ENCODE measurements at regions of chr2 and their contacts with region 1.

Region 1: DNA sequence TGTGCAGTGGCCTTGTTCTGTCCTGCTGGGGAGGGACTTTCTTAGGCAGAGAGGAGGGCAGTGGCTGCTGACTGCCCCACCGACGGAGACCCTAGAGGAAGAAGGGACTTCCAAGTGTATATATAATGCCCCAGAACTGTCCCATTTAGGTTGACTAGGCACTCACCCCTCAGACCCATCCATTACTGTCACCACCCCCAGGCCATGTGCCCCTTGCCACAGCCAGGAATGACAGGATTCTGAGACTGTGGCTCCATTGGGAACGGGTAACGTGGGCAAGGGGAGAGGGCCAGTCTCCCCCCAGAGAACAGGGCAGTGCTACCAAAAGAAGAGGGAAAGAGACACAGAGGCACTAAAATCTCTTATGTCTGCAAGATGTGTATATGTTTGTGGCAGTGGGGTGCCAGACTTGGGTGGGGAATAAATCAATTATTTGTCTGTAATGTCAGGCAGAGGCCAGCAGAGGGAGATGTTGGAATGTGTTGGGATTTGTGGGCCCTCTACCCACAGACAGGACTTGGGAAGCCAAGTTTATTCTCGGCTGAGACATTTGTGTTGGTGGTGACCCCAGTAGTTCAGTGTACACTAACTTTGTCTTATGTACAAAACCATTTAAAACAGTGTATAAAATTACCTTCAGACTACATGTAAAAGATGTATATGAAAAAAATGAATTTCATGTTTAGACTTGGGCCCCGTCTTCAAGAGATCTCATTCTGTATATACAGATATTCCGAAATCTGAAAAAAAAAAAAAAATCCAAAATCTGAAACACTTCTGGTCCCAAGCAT is 24.0 kb upstream of the TMEM37 start:
- DNase-seq: peak in 1 of 2 donors; percentile 61
- ATAC-seq: peak; percentile 45 to 85 (median 74)
- H3K4me3 ChIP-seq: no peak overlapping the region
- H3K27ac ChIP-seq: peak overlapping the region in 1 of 10 donors; percentile 16
- H3K4me1 ChIP-seq: peaks cover 0 to 13% (median 4%) of the 10 kb centered on the region in 9 donors
- H3K27me3 ChIP-seq: no peaks in the 10 kb centered on the region
- CTCF ChIP-seq: peak; percentile 67 to 85 (median 79)

Region 2: DNA sequence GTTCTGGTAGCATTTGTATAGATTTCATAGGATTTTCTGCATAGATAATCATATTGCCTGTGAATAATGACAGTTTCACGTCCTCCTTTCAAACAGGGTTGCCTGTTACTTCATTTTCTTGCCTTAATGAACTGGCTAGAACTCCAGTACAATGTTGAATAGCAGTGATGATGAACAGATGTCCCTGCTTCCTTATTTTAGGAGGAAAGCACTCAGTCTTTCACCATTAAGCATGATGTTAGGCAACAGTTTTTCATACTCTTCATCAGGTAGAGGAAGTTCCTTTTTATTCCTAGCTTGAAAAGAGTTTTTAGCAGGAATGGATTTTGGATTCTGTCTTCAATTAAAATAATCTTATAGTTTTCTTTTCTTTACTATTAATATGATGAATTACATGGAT is 80.7 kb before region 1 on chr2:
- intact Hi-C with region 1: no loop called
- DNase-seq: no peak
- ATAC-seq: no peak
- H3K4me3 ChIP-seq: no peak overlapping the region
- H3K27ac ChIP-seq: no peak overlapping the region
- H3K4me1 ChIP-seq: peaks cover 0 to 10% (median 0%) of the 10 kb centered on the region in 9 donors
- H3K27me3 ChIP-seq: no peaks in the 10 kb centered on the region
- CTCF ChIP-seq: no peak

Region 3: GRCh38 chr2:119476301-119477021 is 68.8 kb after region 1 on chr2:
- intact Hi-C with region 1: loop called (anchors 1 to 5 kb)
- DNase-seq: peak in 1 of 2 donors; percentile 52
- ATAC-seq: peak; percentile 57 to 78 (median 72)
- H3K4me3 ChIP-seq: peak overlapping the region in 2 of 10 donors; percentile 20
- H3K27ac ChIP-seq: peak overlapping the region in 5 of 10 donors; percentile 28 to 73 (median 44)
- H3K4me1 ChIP-seq: peaks cover 0 to 39% (median 18%) of the 10 kb centered on the region in 9 donors
- H3K27me3 ChIP-seq: peaks cover 0 to 6% (median 0%) of the 10 kb centered on the region in 7 donors
- CTCF ChIP-seq: peak; percentile 89 to 98 (median 96)

Region 4: GRCh38 chr2:119491808-119492533 is 84.3 kb after region 1 on chr2:
- intact Hi-C with region 1: no loop called
- DNase-seq: no peak
- ATAC-seq: peak in 6 of 8 donors; percentile 47 to 61 (median 50)
- H3K4me3 ChIP-seq: no peak overlapping the region
- H3K27ac ChIP-seq: peak overlapping the region in 6 of 10 donors; percentile 57 to 88 (median 70)
- H3K4me1 ChIP-seq: peaks cover 2 to 54% (median 29%) of the 10 kb centered on the region in 9 donors
- H3K27me3 ChIP-seq: peaks cover 0 to 9% (median 0%) of the 10 kb centered on the region in 7 donors
- CTCF ChIP-seq: no peak

Region 5: GRCh38 chr2:119592444-119592843 is 184.8 kb after region 1 on chr2:
- intact Hi-C with region 1: loop called in 1 of 10 experiments (anchors 5 kb)
- DNase-seq: no peak
- ATAC-seq: no peak
- H3K4me3 ChIP-seq: no peak overlapping the region
- H3K27ac ChIP-seq: no peak overlapping the region
- H3K4me1 ChIP-seq: peaks cover 0 to 30% (median 7%) of the 10 kb centered on the region in 9 donors
- H3K27me3 ChIP-seq: no peaks in the 10 kb centered on the region
- CTCF ChIP-seq: peak in 4 of 9 donors; percentile 7 to 46 (median 30)

Region 6: DNA sequence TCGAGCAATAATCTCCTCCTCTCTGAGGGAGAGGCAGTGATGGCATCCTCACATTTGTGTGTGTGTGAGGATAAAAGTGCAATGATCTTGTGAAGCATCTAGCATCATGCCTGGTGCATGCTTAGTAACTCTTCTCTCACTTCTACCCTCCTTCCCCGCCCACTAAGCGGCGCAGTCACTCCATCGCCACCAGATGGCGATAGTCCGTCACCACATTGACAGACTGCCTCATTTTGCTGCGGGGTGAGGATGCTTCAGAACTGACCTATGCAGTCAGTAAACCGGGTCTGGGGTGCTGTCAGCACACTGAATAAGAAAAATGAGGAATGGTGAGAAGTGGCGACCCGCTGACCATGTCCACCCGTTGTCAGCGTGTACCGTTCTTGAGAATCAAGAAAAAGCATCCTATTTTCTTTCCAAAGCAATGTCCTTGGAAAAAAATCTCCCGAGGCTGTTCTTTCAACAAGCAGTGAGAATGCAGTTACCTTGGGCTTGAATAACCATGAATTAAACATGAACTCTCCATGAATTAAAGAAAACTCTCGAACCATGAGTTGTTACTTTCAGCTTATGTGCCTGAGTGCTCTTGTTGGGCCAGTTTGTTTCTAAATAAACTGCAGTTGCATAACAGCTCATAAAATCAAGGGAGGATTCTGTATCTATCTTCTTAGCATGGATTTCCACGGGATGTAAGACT is 234.1 kb after region 1 on chr2:
- intact Hi-C with region 1: loop called in 1 of 10 experiments (anchors 10 kb)
- DNase-seq: peak; percentile 63 to 66
- ATAC-seq: peak; percentile 75 to 91 (median 84)
- H3K4me3 ChIP-seq: no peak overlapping the region
- H3K27ac ChIP-seq: no peak overlapping the region
- H3K4me1 ChIP-seq: peaks cover 0 to 22% (median 6%) of the 10 kb centered on the region in 9 donors
- H3K27me3 ChIP-seq: peaks cover 0 to 8% (median 0%) of the 10 kb centered on the region in 7 donors
- CTCF ChIP-seq: peak; percentile 69 to 97 (median 94)